Left cardiac atrium (tissue), 4 donors: ENCODE measurements at regions of chr1 and their contacts with region 1.

Region 1: GRCh38 chr1:173409613-173410012 is 67.5 kb upstream of the PRDX6 start:
- DNase-seq: peak; percentile 61
- ATAC-seq: peak; percentile 59 to 84

Region 2: GRCh38 chr1:172818841-172819527 is 590.6 kb before region 1 on chr1:
- intact Hi-C with region 1: loop called in 1 of 2 experiments (anchors 10 kb)
- DNase-seq: no peak
- ATAC-seq: peak; percentile 46 to 63

Region 3: GRCh38 chr1:173255214-173255813 is 154.3 kb before region 1 on chr1:
- intact Hi-C with region 1: loop called (anchors 10 kb)
- DNase-seq: no peak
- ATAC-seq: peak in 1 of 2 donors; percentile 21

Region 4: GRCh38 chr1:173467426-173467825 is 57.8 kb after region 1 on chr1:
- intact Hi-C with region 1: no loop called
- DNase-seq: no peak
- ATAC-seq: no peak